ENCODE measurements at regions of chr3 and their contacts with region 1.

Region 1: DNA sequence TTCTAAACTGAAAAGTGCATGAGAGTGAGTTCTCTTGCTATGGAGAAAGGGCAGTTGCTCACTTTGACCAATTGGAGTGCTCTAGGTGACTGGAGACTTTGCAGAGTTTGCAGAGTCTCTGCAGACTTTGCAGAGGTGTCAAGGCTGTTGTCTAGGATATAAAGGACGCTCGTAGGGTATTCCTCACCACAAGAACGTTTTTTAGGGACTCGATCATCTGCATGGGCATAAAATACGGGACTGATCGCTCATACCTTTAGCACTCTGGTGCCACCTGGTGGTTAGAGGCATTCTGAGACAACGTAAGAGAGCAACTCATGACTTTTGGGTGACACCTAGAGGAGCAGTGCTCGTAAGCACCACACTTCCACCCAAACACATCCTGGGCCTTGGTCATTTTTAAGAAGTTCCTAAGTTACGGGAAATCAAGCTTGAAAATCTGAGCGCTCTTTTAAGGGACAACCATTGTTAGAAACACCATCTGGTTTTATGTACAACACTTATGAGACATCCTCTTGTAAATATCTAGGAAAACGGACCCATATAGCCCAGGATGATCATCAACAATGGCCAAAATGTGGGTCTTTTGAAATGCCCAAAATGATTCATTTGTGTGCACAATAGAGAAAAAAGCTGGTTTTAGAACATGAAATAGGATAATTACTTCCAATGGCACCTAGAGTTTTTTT is 51.6 kb upstream of the XCR1 start:
- DNase-seq: peak; percentile 91
- ATAC-seq: peak; percentile 99
- H3K4me3 ChIP-seq: peak overlapping the region in 2 of 5 experiments; percentile 20 to 25
- H3K4me3 Mint-ChIP-seq: peak overlapping the region; percentile 23
- H3K27ac ChIP-seq: no peak overlapping the region
- H3K27ac Mint-ChIP-seq: no peak overlapping the region
- H3K4me1 ChIP-seq: peaks cover 2 to 7% of the 10 kb centered on the region in 2 donors
- H3K4me1 Mint-ChIP-seq: peaks cover 5% of the 10 kb centered on the region
- H3K27me3 ChIP-seq: no peaks in the 10 kb centered on the region
- H3K27me3 Mint-ChIP-seq: no peaks in the 10 kb centered on the region
- CTCF ChIP-seq: peak; percentile 98

Region 2: DNA sequence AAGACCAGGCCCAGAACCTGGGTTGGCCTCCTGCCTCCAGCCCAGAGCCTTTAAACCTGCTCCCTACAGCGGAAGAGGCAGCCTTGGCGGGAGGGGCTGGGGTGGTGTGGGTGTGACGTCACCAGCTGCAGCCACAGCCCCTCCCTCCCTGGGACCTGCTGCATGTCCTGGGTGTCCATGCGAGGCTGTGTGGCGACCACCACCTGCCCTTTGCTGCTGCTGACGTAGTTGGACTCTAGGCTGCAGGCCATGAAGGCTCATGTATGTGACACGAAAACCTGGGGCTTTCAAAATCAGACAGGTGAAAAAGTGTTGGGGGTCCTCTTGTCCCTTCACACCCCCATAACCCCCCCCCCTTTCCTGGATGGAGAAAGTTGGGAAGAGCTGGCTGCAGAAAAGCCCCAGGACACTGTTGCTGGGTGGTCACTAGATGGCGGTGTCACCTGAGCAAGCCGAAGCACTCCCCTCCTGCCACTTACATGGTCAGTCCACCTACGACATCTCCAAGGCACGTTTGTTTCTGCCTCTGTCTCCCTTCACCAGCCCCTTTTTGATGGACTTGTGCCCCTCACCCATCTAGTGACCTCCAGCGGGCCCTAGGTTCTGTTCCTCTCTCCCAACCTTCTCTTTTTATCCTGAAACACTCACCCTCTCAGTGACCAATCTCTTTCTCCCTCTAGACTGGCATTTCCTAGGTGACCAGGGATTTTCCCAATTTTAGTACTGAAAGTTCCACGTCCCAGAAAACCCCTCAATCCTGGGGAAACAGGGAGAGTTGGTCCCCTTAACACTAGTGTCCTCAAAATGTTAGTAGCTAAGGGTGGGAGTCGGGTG is 317.8 kb before region 1 on chr3:
- CTCF ChIA-PET with region 1: interaction called, 42 read pairs
- POLR2A ChIA-PET with region 1: no interaction called
- intact Hi-C with region 1: no loop called
- DNase-seq: peak; percentile 63
- ATAC-seq: peak; percentile 58
- H3K4me3 ChIP-seq: no peak overlapping the region
- H3K4me3 Mint-ChIP-seq: no peak overlapping the region
- H3K27ac ChIP-seq: no peak overlapping the region
- H3K27ac Mint-ChIP-seq: no peak overlapping the region
- H3K4me1 ChIP-seq: peaks cover 0 to 5% of the 10 kb centered on the region in 2 donors
- H3K4me1 Mint-ChIP-seq: peaks cover 2% of the 10 kb centered on the region
- H3K27me3 ChIP-seq: peaks cover 0 to 2% (median 0%) of the 10 kb centered on the region in 4 experiments
- H3K27me3 Mint-ChIP-seq: peaks cover 13% of the 10 kb centered on the region
- CTCF ChIP-seq: peak; percentile 66

Region 3: DNA sequence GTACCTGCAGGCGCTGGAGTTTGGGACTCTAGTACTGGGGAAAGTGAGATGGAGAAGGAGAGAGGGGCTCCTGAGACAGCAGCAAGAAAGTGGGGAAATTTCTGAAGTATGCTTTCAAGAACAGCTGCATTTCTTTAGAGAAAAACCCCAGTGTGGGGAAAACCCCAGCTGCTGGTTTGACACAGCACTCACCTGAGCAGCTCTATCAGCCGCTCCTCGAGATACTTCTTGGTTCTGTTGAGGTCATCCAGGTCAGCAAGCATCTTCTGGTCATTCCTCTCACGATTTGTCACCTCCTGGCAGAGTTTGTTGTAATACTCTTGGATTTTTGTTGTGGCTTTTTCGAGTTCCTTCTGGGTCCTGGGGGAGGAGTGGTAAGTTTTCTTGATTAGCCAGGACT is 116.8 kb before region 1 on chr3:
- CTCF ChIA-PET with region 1: interaction called, 12 read pairs
- POLR2A ChIA-PET with region 1: no interaction called
- intact Hi-C with region 1: no loop called
- DNase-seq: no peak
- ATAC-seq: no peak
- H3K4me3 ChIP-seq: no peak overlapping the region
- H3K4me3 Mint-ChIP-seq: no peak overlapping the region
- H3K27ac ChIP-seq: no peak overlapping the region
- H3K27ac Mint-ChIP-seq: no peak overlapping the region
- H3K4me1 ChIP-seq: no peaks in the 10 kb centered on the region
- H3K4me1 Mint-ChIP-seq: peaks cover 2% of the 10 kb centered on the region
- H3K27me3 ChIP-seq: no peaks in the 10 kb centered on the region
- H3K27me3 Mint-ChIP-seq: no peaks in the 10 kb centered on the region
- CTCF ChIP-seq: no peak

Region 4: GRCh38 chr3:46089237-46090011 is 10.6 kb after region 1 on chr3:
- CTCF ChIA-PET with region 1: interaction called, 96 read pairs
- POLR2A ChIA-PET with region 1: no interaction called
- intact Hi-C with region 1: no loop called
- DNase-seq: peak; percentile 52
- ATAC-seq: peak; percentile 66
- H3K4me3 ChIP-seq: no peak overlapping the region
- H3K4me3 Mint-ChIP-seq: no peak overlapping the region
- H3K27ac ChIP-seq: no peak overlapping the region
- H3K27ac Mint-ChIP-seq: peak overlapping the region; percentile 29
- H3K4me1 ChIP-seq: peaks cover 50 to 58% of the 10 kb centered on the region in 2 donors
- H3K4me1 Mint-ChIP-seq: peaks cover 59% of the 10 kb centered on the region
- H3K27me3 ChIP-seq: no peaks in the 10 kb centered on the region
- H3K27me3 Mint-ChIP-seq: no peaks in the 10 kb centered on the region
- CTCF ChIP-seq: no peak

Region 5: GRCh38 chr3:46135475-46135874 is 56.6 kb after region 1 on chr3:
- CTCF ChIA-PET with region 1: no interaction called
- POLR2A ChIA-PET with region 1: no interaction called
- intact Hi-C with region 1: no loop called
- DNase-seq: no peak
- ATAC-seq: no peak
- H3K4me3 ChIP-seq: no peak overlapping the region
- H3K4me3 Mint-ChIP-seq: no peak overlapping the region
- H3K27ac ChIP-seq: no peak overlapping the region
- H3K27ac Mint-ChIP-seq: no peak overlapping the region
- H3K4me1 ChIP-seq: no peaks in the 10 kb centered on the region
- H3K4me1 Mint-ChIP-seq: peaks cover 1% of the 10 kb centered on the region
- H3K27me3 ChIP-seq: no peaks in the 10 kb centered on the region
- H3K27me3 Mint-ChIP-seq: no peaks in the 10 kb centered on the region
- CTCF ChIP-seq: no peak

Region 6: GRCh38 chr3:46208167-46208704 is 129.4 kb after region 1 on chr3 and contains the start of gene CCR1:
- CTCF ChIA-PET with region 1: interaction called, 30 read pairs
- POLR2A ChIA-PET with region 1: no interaction called
- intact Hi-C with region 1: loop called (anchors 2 kb)
- DNase-seq: peak; percentile 60
- ATAC-seq: peak; percentile 82
- H3K4me3 ChIP-seq: peak within 1 kb of the TSS in 4 of 5 experiments; percentile 4 to 51 (median 11)
- H3K4me3 Mint-ChIP-seq: peak within 1 kb of the TSS; percentile 40
- H3K27ac ChIP-seq: no peak within 1 kb of the TSS
- H3K27ac Mint-ChIP-seq: peak within 1 kb of the TSS; percentile 70
- H3K4me1 ChIP-seq: peaks cover 25 to 38% of the 10 kb centered on the region in 2 donors
- H3K4me1 Mint-ChIP-seq: peaks cover 45% of the 10 kb centered on the region
- H3K27me3 ChIP-seq: no peaks in the 10 kb centered on the region
- H3K27me3 Mint-ChIP-seq: no peaks in the 10 kb centered on the region
- CTCF ChIP-seq: peak; percentile 64
- total RNA-seq, gene CCR1: 0.79 and 1.1 TPM in 2 replicates

Region 7: GRCh38 chr3:46368569-46368968 is 289.7 kb after region 1 on chr3:
- CTCF ChIA-PET with region 1: interaction called, 233 read pairs
- POLR2A ChIA-PET with region 1: interaction called, 8 read pairs
- intact Hi-C with region 1: no loop called
- DNase-seq: peak; percentile 79
- ATAC-seq: peak; percentile 93
- H3K4me3 ChIP-seq: no peak overlapping the region
- H3K4me3 Mint-ChIP-seq: peak overlapping the region; percentile 33
- H3K27ac ChIP-seq: no peak overlapping the region
- H3K27ac Mint-ChIP-seq: peak overlapping the region; percentile 28
- H3K4me1 ChIP-seq: peaks cover 12 to 20% of the 10 kb centered on the region in 2 donors
- H3K4me1 Mint-ChIP-seq: peaks cover 32% of the 10 kb centered on the region
- H3K27me3 ChIP-seq: no peaks in the 10 kb centered on the region
- H3K27me3 Mint-ChIP-seq: no peaks in the 10 kb centered on the region
- CTCF ChIP-seq: peak; percentile 57

Region 8: DNA sequence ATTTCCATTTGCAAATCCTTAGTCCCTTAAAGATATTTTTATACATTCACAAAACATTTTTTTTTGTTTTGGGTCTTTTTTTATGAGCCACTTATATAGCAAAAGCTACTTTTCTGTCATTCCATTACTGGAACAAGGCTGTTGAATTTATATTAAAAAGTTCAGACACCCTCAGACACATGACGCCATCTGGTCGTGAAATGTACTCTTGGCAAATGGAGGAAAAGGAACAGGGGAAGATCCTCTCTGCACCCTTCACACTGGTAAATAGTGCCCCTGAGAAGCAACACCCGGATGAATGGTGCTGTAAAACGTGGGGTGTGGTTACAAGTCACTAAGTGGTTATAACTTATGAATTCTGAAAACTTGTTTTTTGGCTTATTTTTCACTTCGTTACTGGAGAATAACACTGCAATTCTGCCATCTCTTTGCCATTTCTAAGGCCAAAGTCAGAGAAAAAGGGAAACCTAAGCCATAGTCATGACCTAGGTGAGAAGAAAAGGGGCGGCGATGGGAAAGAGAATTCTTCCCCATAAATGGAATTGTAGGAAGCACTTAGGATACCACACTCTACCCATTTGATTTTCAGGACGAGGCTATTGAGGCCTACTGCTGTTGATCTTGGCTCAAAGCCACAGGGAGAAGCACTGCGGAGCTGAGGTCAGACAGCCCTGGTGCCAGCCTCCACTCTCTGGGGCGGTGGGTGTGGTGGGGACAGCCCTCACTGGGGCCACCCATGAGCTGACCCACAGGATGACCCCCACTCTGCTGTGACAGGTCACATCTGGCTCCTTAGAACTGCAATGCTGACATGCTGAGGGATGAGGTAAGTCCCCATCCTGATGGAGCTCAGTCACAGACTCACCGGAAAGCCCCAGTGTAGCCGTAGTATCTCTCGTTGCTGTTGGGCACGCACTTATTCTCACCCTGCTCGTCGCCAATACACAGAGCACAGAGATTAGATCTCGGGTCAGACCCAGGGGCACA is 364.0 kb after region 1 on chr3:
- CTCF ChIA-PET with region 1: interaction called, 3 read pairs
- POLR2A ChIA-PET with region 1: no interaction called
- intact Hi-C with region 1: loop called (anchors 5 kb)
- DNase-seq: peak; percentile 58
- ATAC-seq: no peak
- H3K4me3 ChIP-seq: no peak overlapping the region
- H3K4me3 Mint-ChIP-seq: no peak overlapping the region
- H3K27ac ChIP-seq: no peak overlapping the region
- H3K27ac Mint-ChIP-seq: no peak overlapping the region
- H3K4me1 ChIP-seq: peaks cover 32 to 33% of the 10 kb centered on the region in 2 donors
- H3K4me1 Mint-ChIP-seq: peaks cover 34% of the 10 kb centered on the region
- H3K27me3 ChIP-seq: no peaks in the 10 kb centered on the region
- H3K27me3 Mint-ChIP-seq: peaks cover 4% of the 10 kb centered on the region
- CTCF ChIP-seq: peak; percentile 72

Region 9: DNA sequence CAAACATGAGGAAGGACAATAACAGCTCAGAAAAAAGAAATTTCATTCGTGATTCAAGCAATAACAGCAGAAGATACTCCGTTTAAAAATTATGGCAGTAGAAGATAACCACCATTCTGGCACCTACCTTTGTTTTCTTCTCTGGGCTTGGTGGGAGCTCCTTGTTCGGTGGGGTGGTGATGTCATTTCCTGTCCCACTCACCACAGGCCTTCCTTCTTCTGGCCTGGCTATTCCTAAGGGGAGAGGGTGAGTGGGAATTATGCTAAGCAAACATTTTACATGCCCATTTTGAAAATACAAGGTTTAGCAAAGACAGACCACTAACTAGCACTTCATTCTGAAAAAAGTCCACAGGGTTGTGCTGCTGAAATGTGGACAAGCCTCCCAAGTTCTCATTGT is 1798.4 kb after region 1 on chr3:
- CTCF ChIA-PET with region 1: no interaction called
- POLR2A ChIA-PET with region 1: no interaction called
- intact Hi-C with region 1: no loop called
- DNase-seq: no peak
- ATAC-seq: no peak
- H3K4me3 ChIP-seq: no peak overlapping the region
- H3K4me3 Mint-ChIP-seq: no peak overlapping the region
- H3K27ac ChIP-seq: no peak overlapping the region
- H3K27ac Mint-ChIP-seq: no peak overlapping the region
- H3K4me1 ChIP-seq: peaks cover 0 to 13% of the 10 kb centered on the region in 2 donors
- H3K4me1 Mint-ChIP-seq: peaks cover 17% of the 10 kb centered on the region
- H3K27me3 ChIP-seq: no peaks in the 10 kb centered on the region
- H3K27me3 Mint-ChIP-seq: no peaks in the 10 kb centered on the region
- CTCF ChIP-seq: no peak

Measured in B cell (primary cell).